ENCODE measurements at regions of chr7 and their contacts with region 1.

Region 1: GRCh38 chr7:150502519-150502918 is 12.2 kb upstream of the GIMAP7 start:
- DNase-seq: no peak
- ATAC-seq: peak; percentile 95
- H3K4me3 Mint-ChIP-seq: peak overlapping the region; percentile 82
- H3K27ac Mint-ChIP-seq: peak overlapping the region; percentile 97
- H3K4me1 Mint-ChIP-seq: peaks cover 62% of the 10 kb centered on the region
- H3K27me3 Mint-ChIP-seq: no peaks in the 10 kb centered on the region

Region 2: DNA sequence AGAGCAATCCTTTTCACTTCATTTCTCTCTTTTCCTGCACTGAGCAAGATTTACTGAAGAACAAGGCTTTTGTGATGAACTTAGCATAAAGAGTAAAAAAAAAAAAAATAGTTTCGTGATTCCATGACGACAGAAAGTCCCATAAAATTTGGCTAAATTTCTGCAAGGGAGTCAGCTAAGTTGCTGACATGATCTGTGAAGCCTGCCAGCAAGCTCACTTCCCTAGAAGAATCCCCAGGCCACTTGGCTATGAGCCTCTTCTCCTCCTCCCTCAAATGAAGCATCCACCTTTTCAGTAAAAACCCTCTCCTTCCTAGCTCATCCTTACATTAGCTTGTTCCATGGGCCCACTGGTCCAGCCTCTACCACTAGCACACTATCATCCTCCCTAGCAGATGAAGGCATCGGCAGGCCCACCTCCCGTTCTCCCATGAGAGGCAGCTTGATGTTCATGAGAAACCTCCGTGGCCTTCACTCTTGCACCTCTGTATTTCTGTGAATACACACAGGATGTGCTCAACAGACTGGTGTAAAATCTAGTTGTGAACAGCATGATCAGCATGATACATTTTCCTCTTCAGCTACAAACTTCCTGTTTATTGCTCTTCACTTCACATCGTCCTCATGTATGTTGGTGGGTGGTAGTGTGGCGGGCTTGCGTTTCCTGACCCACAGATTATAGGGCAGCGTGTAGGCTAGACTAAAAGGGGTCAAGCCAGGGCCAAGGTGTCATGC is 21.2 kb before region 1 on chr7:
- POLR2A ChIA-PET with region 1: interaction called, 32 read pairs
- DNase-seq: peak; percentile 65
- ATAC-seq: peak; percentile 86
- H3K4me3 Mint-ChIP-seq: peak overlapping the region; percentile 84
- H3K27ac Mint-ChIP-seq: peak overlapping the region; percentile 98
- H3K4me1 Mint-ChIP-seq: peaks cover 71% of the 10 kb centered on the region
- H3K27me3 Mint-ChIP-seq: no peaks in the 10 kb centered on the region

Region 3: GRCh38 chr7:150580638-150581394 is 78.3 kb after region 1 on chr7:
- POLR2A ChIA-PET with region 1: no interaction called
- DNase-seq: no peak
- ATAC-seq: no peak
- H3K4me3 Mint-ChIP-seq: no peak overlapping the region
- H3K27ac Mint-ChIP-seq: no peak overlapping the region
- H3K4me1 Mint-ChIP-seq: peaks cover 19% of the 10 kb centered on the region
- H3K27me3 Mint-ChIP-seq: no peaks in the 10 kb centered on the region

Measured in activated naive CD8-positive, alpha-beta T cell treated with anti-CD3 and anti-CD28 coated beads, Interleukin-2, amount 10 ng/mL, durations not matched to agents 7 days and 5 days (primary cell).